ENCODE measurements at regions of chr7 and their contacts with region 1.

Region 1: GRCh38 chr7:55887821-55888247 is 578 bp downstream of the ZNF713 start:
- DNase-seq: no peak
- H3K4me3 ChIP-seq: peak overlapping the region; percentile 59 to 94 (median 90)
- H3K27ac ChIP-seq: peak overlapping the region; percentile 60
- H3K4me1 ChIP-seq: peaks cover 2% of the 10 kb centered on the region
- H3K27me3 ChIP-seq: no peaks in the 10 kb centered on the region
- CTCF ChIP-seq: no peak
- POLR2A ChIP-seq: no peak

Region 2: DNA sequence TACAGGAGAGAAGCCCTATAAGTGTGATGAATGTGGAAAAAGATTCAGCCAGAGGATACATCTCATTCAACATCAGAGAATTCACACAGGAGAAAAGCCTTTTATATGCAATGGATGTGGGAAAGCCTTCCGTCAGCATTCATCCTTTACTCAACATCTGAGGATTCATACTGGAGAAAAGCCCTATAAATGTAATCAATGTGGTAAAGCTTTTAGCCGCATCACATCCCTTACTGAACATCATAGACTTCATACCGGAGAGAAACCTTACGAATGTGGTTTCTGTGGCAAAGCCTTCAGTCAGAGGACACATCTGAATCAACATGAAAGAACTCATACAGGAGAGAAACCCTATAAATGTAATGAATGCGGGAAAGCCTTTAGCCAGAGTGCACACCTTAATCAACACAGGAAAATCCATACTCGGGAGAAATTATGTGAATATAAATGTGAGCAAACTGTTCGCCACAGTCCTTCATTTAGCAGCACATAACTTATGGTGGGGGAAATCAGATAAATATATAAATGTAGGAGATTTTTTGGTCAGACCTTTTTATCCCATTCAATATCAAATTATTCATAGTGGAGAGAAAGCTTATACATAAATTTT is 51.8 kb after region 1 on chr7:
- CTCF ChIA-PET with region 1: no interaction called
- POLR2A ChIA-PET with region 1: no interaction called
- dilution Hi-C with region 1: no loop called
- intact Hi-C with region 1: no loop called
- DNase-seq: no peak
- H3K4me3 ChIP-seq: no peak overlapping the region
- H3K27ac ChIP-seq: no peak overlapping the region
- H3K4me1 ChIP-seq: no peaks in the 10 kb centered on the region
- H3K27me3 ChIP-seq: no peaks in the 10 kb centered on the region
- CTCF ChIP-seq: no peak
- POLR2A ChIP-seq: no peak

Region 3: DNA sequence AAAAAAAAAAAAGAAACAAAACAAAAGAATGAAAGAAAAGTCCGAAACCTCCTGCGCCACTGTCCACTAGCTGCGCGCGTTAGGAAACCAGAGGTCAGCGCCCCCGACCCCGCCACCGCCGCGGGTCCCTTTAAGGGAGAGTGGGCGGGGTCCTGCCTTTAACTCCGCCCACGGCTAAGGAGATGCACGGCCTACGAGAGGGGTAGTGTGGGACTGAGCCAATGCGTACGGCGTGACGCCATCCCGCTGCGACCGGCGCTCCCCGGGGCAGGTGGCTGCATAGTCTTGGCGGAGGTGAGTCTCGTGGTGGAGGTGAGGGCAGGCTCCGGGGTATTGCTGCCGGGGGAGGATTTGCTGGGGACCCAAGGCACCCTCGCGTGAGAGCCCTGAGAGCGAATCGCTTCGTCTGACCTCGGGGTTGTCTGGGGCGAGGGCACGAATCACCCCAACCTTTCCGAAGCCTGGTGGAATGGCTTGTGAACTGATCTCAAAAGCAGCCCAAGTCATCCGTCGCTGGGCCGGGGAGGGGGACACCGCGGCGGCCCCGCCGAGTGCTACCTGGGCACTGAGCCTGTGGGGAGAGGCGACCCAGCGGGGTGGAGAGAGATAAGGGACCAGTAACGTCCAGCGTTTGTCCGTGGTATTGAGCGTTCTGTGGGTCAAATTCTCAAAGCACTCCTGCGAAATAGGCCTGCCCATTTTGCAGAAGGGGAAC is 64.0 kb after region 1 on chr7 and contains the start of gene MRPS17:
- CTCF ChIA-PET with region 1: no interaction called
- POLR2A ChIA-PET with region 1: no interaction called
- dilution Hi-C with region 1: no loop called
- intact Hi-C with region 1: loop called (anchors 1 kb)
- DNase-seq: peak; percentile 89
- H3K4me3 ChIP-seq: peak within 1 kb of the TSS; percentile 83 to 88 (median 84)
- H3K27ac ChIP-seq: peak within 1 kb of the TSS; percentile 55
- H3K4me1 ChIP-seq: no peaks in the 10 kb centered on the region
- H3K27me3 ChIP-seq: no peaks in the 10 kb centered on the region
- CTCF ChIP-seq: no peak
- POLR2A ChIP-seq: peak; percentile 79
- total RNA-seq, gene MRPS17: 19.5 TPM in 2 replicates